Activated CD4-positive, alpha-beta memory T cell treated with anti-CD3 and anti-CD28 coated beads for 36 hours (primary cell): ENCODE measurements at regions of chr2 and their contacts with region 1.

Region 1: DNA sequence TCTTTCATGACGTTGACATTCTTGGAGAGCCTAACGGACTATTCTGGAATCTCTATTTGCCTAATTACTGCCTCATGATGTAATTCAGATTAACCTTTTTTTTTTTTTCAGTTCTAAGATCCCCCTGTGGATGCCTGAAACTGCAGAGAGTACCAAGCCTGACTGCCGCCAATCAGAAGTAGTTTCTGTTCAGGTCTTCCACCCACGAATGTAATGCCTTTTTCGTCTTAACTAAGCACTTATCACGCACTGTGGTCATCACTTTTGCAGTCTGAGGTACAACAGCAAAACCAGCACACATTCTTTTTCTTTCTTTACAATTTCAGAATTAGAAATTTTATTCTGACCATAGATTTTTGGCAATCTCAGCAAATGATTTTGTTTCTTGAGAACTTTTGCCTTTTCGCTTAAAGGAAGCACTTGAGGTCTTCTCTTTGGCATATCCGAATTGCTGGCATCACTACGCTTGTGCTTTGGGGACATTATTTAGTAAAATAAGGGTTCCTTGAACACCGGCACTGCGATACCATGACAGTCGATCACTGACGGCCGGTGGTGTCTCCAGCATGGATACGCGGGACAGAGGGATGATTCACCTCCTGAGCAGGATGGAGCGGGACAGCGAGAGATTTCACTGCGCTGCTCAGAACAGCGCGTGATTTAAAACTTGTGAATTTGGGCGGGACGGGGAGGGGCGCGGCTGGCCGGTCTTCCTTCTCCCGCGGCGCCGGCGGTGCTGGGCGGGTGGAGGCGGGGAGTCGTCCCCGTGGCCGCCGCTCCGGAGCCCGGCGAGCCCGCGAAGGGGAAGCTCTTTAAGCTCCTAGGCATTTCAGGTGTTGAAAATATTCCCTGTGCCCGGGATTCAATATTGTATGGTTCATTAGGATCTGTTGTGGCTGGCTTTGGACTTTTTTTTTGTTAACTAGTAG is 32.0 kb upstream of the GPR55 start:
- DNase-seq: peak; percentile 65
- H3K4me3 Mint-ChIP-seq: peak overlapping the region; percentile 77
- H3K27ac Mint-ChIP-seq: peak overlapping the region; percentile 82
- H3K4me1 Mint-ChIP-seq: peaks cover 46% of the 10 kb centered on the region
- H3K27me3 Mint-ChIP-seq: peaks cover 58% of the 10 kb centered on the region

Region 2: DNA sequence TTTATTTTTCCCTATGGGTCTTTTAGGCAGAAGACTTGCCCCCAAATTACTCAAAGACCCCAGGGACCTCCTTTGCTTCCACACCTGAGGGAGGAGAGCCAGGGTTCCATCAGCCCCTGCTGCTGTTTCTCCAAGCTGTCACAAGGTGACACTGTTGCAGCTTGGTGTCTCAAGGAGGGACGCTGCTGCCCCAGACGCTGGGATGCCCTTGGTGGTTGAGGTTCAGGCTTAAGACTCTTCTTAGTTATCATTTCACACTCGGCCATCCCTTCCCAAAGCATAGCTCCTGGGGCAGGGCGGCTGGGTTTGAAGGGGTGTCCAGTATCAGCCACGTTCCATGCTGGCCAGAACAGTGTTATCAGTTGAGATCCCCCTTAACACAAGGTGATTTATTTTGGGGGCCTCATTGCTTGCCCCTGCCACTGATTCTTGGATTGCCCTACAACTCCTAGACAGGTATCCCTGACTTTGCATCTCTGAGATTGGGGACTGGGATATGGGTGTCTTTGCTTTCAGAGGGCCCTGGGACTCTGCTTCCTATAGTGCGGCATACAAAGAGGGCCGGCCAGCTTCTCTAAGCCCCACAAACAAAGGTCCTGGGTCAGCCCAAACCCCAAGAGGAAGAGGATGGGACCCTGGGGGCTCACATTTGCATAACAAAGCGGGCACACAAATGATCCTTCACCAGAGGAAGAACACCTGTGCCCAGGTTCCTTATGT is 54.8 kb before region 1 on chr2:
- CTCF ChIA-PET with region 1: interaction called, 3 read pairs
- POLR2A ChIA-PET with region 1: interaction called, 3 read pairs
- intact Hi-C with region 1: loop called (anchors 1 kb)
- DNase-seq: peak; percentile 72
- H3K4me3 Mint-ChIP-seq: no peak overlapping the region
- H3K27ac Mint-ChIP-seq: no peak overlapping the region
- H3K4me1 Mint-ChIP-seq: peaks cover 49% of the 10 kb centered on the region
- H3K27me3 Mint-ChIP-seq: peaks cover 21% of the 10 kb centered on the region